HepG2 (cell line): ENCODE measurements at regions of chr9 and their contacts with region 1.

Region 1: DNA sequence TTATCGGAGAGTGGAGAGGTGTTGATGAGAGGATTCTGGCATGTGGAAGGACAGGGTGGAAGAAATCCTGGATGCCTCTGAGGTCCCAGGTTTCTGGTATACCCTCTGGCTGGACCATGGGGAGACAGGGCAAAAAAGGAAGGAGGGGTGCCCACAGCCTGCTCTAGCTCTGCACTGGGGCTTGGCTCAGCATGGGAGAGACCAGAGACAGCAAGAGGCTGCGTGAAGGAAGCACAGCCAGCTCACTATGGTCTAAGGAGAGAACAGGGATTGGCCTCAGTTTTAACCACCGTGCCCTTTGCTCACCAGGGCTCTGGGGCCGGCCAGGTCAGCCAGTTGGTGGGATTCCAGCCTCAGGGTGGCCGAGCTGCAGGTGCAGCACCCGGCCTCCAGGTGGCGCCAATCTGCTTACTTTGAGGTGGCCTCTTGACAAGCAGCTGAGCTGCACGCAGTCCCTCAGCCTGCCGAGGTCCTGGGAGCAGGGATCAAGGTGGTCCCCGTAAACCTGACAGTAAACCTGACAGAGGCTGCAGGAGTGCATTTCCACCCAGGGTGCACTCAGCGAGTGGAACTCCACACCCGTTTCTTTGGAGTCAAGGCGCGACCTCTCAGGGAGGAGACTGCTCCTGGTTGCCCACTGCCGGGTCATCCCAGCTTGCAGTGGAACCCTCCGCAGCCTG is 25.0 kb upstream of the SPTLC1 start:
- DNase-seq: peak; percentile 67
- ATAC-seq: peak; percentile 53
- H3K4me3 ChIP-seq: peak overlapping the region in 1 of 3 experiments; percentile 74; a peak in 2 of 6 replicates
- H3K27ac ChIP-seq: peak overlapping the region; percentile 86
- H3K4me1 ChIP-seq: peaks cover 48% of the 10 kb centered on the region
- H3K27me3 ChIP-seq: peaks cover 0 to 22% of the 10 kb centered on the region in 2 experiments; a peak in 4 of 5 replicates
- CTCF ChIP-seq: peak; percentile 97
- EP300 ChIP-seq: no peak
- POLR2A ChIP-seq: no peak
- RAD21 ChIP-seq: peak; percentile 89

Region 2: GRCh38 chr9:92242260-92243136 is 102.3 kb after region 1 on chr9:
- CTCF ChIA-PET with region 1: no interaction called
- POLR2A ChIA-PET with region 1: interaction called, 3 read pairs
- in situ Hi-C with region 1: loop called (anchors 10 kb)
- intact Hi-C with region 1: no loop called
- DNase-seq: no peak
- ATAC-seq: peak; percentile 59
- H3K4me3 ChIP-seq: no peak overlapping the region
- H3K27ac ChIP-seq: no peak overlapping the region
- H3K4me1 ChIP-seq: peaks cover 5% of the 10 kb centered on the region
- H3K27me3 ChIP-seq: no peaks in the 10 kb centered on the region
- CTCF ChIP-seq: no peak
- EP300 ChIP-seq: no peak
- POLR2A ChIP-seq: no peak
- RAD21 ChIP-seq: no peak

Region 3: DNA sequence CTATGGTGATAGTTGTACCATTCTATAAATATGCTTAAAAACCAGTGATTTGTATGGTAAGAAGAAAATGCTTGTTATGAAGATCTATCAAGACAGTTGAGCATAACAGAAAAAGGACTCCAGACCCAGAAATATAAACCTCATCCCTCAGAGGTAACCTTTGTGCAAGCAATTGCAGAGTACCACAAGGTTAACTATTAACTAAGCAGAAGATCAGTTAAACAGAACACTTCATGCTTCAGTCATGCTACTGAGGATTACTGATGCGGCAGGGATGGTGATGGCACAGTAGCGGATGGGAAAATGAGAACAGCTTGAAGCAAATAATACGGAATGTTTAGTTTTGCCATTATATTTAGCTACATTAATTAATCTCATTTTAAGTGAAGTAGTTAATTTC is 107.8 kb after region 1 on chr9:
- CTCF ChIA-PET with region 1: no interaction called
- POLR2A ChIA-PET with region 1: interaction called, 3 read pairs
- in situ Hi-C with region 1: loop called (anchors 10 kb)
- intact Hi-C with region 1: loop called (anchors 1 kb)
- DNase-seq: peak; percentile 73
- ATAC-seq: peak; percentile 98
- H3K4me3 ChIP-seq: no peak overlapping the region
- H3K27ac ChIP-seq: no peak overlapping the region
- H3K4me1 ChIP-seq: peaks cover 23% of the 10 kb centered on the region
- H3K27me3 ChIP-seq: no peaks in the 10 kb centered on the region
- CTCF ChIP-seq: no peak
- EP300 ChIP-seq: no peak
- POLR2A ChIP-seq: no peak
- RAD21 ChIP-seq: no peak

Region 4: GRCh38 chr9:92325269-92325990 is 185.2 kb after region 1 on chr9 and contains the starts of genes CENPP and NOL8:
- CTCF ChIA-PET with region 1: no interaction called
- POLR2A ChIA-PET with region 1: interaction called, 12 read pairs
- in situ Hi-C with region 1: no loop called
- intact Hi-C with region 1: loop called (anchors 2 kb)
- DNase-seq: peak; percentile 86
- ATAC-seq: peak; percentile 95
- H3K4me3 ChIP-seq: peak within 1 kb of the TSS; percentile 74 to 98 (median 93)
- H3K27ac ChIP-seq: peak within 1 kb of the TSS; percentile 96
- H3K4me1 ChIP-seq: peaks cover 40% of the 10 kb centered on the region
- H3K27me3 ChIP-seq: no peaks in the 10 kb centered on the region; a peak in 1 of 5 replicates
- CTCF ChIP-seq: no peak
- EP300 ChIP-seq: 0 out of 4 replicates have a peak, but pooled peaks of 1 of the 2 experiments have one; percentile 24
- POLR2A ChIP-seq: peak; percentile 93
- RAD21 ChIP-seq: no peak; the same call in 1 of the 2 replicates
- total RNA-seq, gene CENPP: 11.0 and 11.4 TPM in 2 replicates
- total RNA-seq, gene NOL8: 35.4 and 36.3 TPM in 2 replicates

Region 5: GRCh38 chr9:92438900-92439526 is 298.8 kb after region 1 on chr9:
- CTCF ChIA-PET with region 1: interaction called, 7 read pairs
- POLR2A ChIA-PET with region 1: interaction called, 3 read pairs
- in situ Hi-C with region 1: loop called (anchors 25 kb)
- intact Hi-C with region 1: loop called (anchors 5 kb)
- DNase-seq: no peak
- ATAC-seq: no peak
- H3K4me3 ChIP-seq: no peak overlapping the region
- H3K27ac ChIP-seq: no peak overlapping the region
- H3K4me1 ChIP-seq: no peaks in the 10 kb centered on the region
- H3K27me3 ChIP-seq: no peaks in the 10 kb centered on the region
- CTCF ChIP-seq: no peak
- EP300 ChIP-seq: no peak
- POLR2A ChIP-seq: no peak
- RAD21 ChIP-seq: no peak

Region 6: GRCh38 chr9:92455217-92455616 is 315.0 kb after region 1 on chr9:
- CTCF ChIA-PET with region 1: interaction called, 5 read pairs
- POLR2A ChIA-PET with region 1: no interaction called
- in situ Hi-C with region 1: no loop called
- intact Hi-C with region 1: loop called (anchors 1 kb)
- DNase-seq: peak; percentile 20
- ATAC-seq: peak; percentile 84
- H3K4me3 ChIP-seq: no peak overlapping the region
- H3K27ac ChIP-seq: no peak overlapping the region
- H3K4me1 ChIP-seq: no peaks in the 10 kb centered on the region
- H3K27me3 ChIP-seq: no peaks in the 10 kb centered on the region
- CTCF ChIP-seq: peak; percentile 58
- EP300 ChIP-seq: no peak
- POLR2A ChIP-seq: no peak
- RAD21 ChIP-seq: peak; percentile 34; the same call in 1 of the 2 replicates

Region 7: GRCh38 chr9:92669890-92670708 is 529.9 kb after region 1 on chr9 and contains the start of gene IPPK:
- CTCF ChIA-PET with region 1: no interaction called
- POLR2A ChIA-PET with region 1: interaction called, 11 read pairs
- in situ Hi-C with region 1: no loop called
- intact Hi-C with region 1: no loop called
- DNase-seq: peak; percentile 96
- ATAC-seq: peak; percentile 94
- H3K4me3 ChIP-seq: peak within 1 kb of the TSS; percentile 85 to 98 (median 89)
- H3K27ac ChIP-seq: peak within 1 kb of the TSS; percentile 85
- H3K4me1 ChIP-seq: peaks cover 38% of the 10 kb centered on the region
- H3K27me3 ChIP-seq: no peaks in the 10 kb centered on the region; a peak in 1 of 5 replicates
- CTCF ChIP-seq: no peak
- EP300 ChIP-seq: no peak
- POLR2A ChIP-seq: peak; percentile 78 to 89
- RAD21 ChIP-seq: no peak
- total RNA-seq, gene IPPK: 14.1 and 15.1 TPM in 2 replicates